ENCODE measurements at regions of chr18 and their contacts with region 1.

Region 1: GRCh38 chr18:13221869-13222855 is 3.6 kb downstream of the LDLRAD4 start:
- DNase-seq: peak; percentile 95
- H3K4me3 ChIP-seq: peak overlapping the region in 1 of 4 donors; percentile 9
- H3K27ac ChIP-seq: peak overlapping the region; percentile 87 to 94 (median 90)
- H3K4me1 ChIP-seq: peaks cover 0 to 65% (median 59%) of the 10 kb centered on the region in 4 donors
- H3K27me3 ChIP-seq: no peaks in the 10 kb centered on the region
- CTCF ChIP-seq: no peak
- EP300 ChIP-seq: peak; percentile 71 to 87 (median 75)
- POLR2A ChIP-seq: no peak

Region 2: DNA sequence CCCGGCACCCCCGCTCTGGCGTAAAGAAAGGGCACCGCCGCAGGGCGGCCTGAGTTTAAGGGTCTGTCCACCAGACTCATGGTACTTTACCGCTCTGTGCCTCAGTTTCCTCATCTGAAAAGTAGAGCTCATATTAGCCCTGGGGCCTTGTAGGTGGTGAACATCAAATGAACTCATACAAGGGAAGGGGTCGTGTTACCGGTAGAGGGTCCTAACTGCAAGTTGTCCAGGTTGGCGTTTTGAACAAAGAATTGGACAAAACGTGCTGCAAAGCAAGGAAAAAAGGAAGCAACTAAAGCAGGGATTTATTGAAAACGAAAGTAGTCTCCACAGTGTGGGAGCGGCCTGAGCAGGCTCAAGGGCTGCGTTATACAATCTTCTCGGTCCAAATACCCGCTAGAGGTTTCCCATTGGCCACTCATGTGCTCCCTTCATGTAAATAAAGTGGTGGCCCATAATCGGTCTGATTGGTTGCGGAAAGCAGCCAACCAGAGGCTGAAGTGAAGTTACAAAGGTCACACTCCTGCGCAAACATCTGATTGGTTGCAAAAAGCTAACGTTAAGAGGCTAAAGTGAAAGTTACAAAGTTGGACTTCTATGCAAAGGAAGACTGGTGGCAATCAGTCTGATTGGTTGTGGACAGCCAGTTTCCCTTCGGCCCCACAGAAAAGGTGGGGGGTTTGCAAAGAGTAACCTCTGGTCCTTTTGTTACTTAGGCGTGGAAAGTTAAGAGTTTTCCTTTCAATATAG is 84.3 kb before region 1 on chr18:
- intact Hi-C with region 1: no loop called
- DNase-seq: peak; percentile 89
- H3K4me3 ChIP-seq: peak overlapping the region; percentile 47 to 63 (median 54)
- H3K27ac ChIP-seq: peak overlapping the region; percentile 49 to 70 (median 68)
- H3K4me1 ChIP-seq: peaks cover 0 to 16% (median 14%) of the 10 kb centered on the region in 4 donors
- H3K27me3 ChIP-seq: peaks cover 0 to 24% (median 6%) of the 10 kb centered on the region in 3 donors
- CTCF ChIP-seq: no peak
- EP300 ChIP-seq: no peak
- POLR2A ChIP-seq: no peak

Region 3: GRCh38 chr18:13260197-13260934 is 38.2 kb after region 1 on chr18:
- intact Hi-C with region 1: loop called (anchors 2 kb)
- DNase-seq: no peak
- H3K4me3 ChIP-seq: no peak overlapping the region
- H3K27ac ChIP-seq: peak overlapping the region; percentile 69 to 79 (median 75)
- H3K4me1 ChIP-seq: peaks cover 0 to 69% (median 64%) of the 10 kb centered on the region in 4 donors
- H3K27me3 ChIP-seq: no peaks in the 10 kb centered on the region
- CTCF ChIP-seq: no peak
- EP300 ChIP-seq: no peak
- POLR2A ChIP-seq: no peak

Region 4: GRCh38 chr18:13318731-13319501 is 96.8 kb after region 1 on chr18:
- intact Hi-C with region 1: loop called (anchors 5 kb)
- DNase-seq: peak; percentile 53
- H3K4me3 ChIP-seq: no peak overlapping the region
- H3K27ac ChIP-seq: peak overlapping the region; percentile 54 to 78 (median 64)
- H3K4me1 ChIP-seq: peaks cover 0 to 27% (median 17%) of the 10 kb centered on the region in 4 donors
- H3K27me3 ChIP-seq: no peaks in the 10 kb centered on the region
- CTCF ChIP-seq: no peak
- EP300 ChIP-seq: no peak
- POLR2A ChIP-seq: no peak

Region 5: DNA sequence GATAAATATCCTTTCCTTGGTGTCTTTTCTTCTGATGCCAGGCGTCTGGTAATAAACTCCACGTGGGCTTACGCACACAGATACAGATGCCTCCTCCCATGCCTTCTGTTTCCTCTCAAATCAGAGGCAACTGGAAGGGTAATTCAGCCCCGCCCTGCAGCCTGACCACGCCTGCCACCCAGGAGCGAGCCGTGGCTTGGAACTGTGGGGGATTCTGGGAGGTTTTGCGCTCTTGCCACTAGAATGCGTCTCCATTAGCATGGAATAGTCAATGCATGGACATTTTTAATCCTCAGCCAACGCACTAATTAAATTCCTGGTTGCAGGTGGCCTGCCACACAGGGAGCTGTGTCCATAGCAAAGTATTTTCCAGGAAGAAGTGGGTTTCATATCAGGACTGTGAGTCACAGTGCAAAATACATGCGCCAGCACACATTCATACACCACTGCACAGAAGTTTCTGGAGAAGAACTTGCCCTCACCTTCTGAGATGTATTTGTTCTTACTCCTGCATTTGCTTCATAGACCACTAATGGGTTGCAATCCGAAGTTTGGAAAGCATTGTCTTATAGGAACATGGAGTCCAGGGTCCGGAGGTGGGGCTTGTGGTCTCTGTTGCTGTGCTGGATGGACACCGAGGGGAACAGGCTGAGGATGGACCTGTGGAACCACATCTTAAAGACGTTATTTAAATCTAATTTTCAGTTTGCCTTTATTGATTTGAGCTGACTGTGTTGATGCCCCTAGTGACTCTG is 147.8 kb after region 1 on chr18:
- intact Hi-C with region 1: loop called (anchors 5 kb)
- DNase-seq: peak; percentile 82
- H3K4me3 ChIP-seq: no peak overlapping the region
- H3K27ac ChIP-seq: peak overlapping the region in 3 of 4 donors; percentile 46 to 68 (median 62)
- H3K4me1 ChIP-seq: peaks cover 0 to 31% (median 24%) of the 10 kb centered on the region in 4 donors
- H3K27me3 ChIP-seq: no peaks in the 10 kb centered on the region
- CTCF ChIP-seq: no peak
- EP300 ChIP-seq: peak in 3 of 4 donors; percentile 62 to 86 (median 67)
- POLR2A ChIP-seq: no peak

Region 6: GRCh38 chr18:13447626-13448334 is 225.6 kb after region 1 on chr18:
- intact Hi-C with region 1: loop called (anchors 5 kb)
- DNase-seq: no peak
- H3K4me3 ChIP-seq: peak overlapping the region in 3 of 4 donors; percentile 23 to 30 (median 24)
- H3K27ac ChIP-seq: peak overlapping the region; percentile 10 to 74 (median 40)
- H3K4me1 ChIP-seq: peaks cover 0 to 51% (median 35%) of the 10 kb centered on the region in 4 donors
- H3K27me3 ChIP-seq: no peaks in the 10 kb centered on the region
- CTCF ChIP-seq: no peak
- EP300 ChIP-seq: no peak
- POLR2A ChIP-seq: no peak

Region 7: GRCh38 chr18:13539050-13539449 is 316.9 kb after region 1 on chr18:
- intact Hi-C with region 1: loop called (anchors 2 kb)
- DNase-seq: no peak
- H3K4me3 ChIP-seq: no peak overlapping the region
- H3K27ac ChIP-seq: peak overlapping the region; percentile 25 to 83 (median 38)
- H3K4me1 ChIP-seq: peaks cover 0 to 70% (median 59%) of the 10 kb centered on the region in 4 donors
- H3K27me3 ChIP-seq: no peaks in the 10 kb centered on the region
- CTCF ChIP-seq: no peak
- EP300 ChIP-seq: peak in 2 of 4 donors; percentile 59 to 68
- POLR2A ChIP-seq: no peak